H1 (cell line): ENCODE measurements at regions of chr9 and their contacts with region 1.

Region 1: DNA sequence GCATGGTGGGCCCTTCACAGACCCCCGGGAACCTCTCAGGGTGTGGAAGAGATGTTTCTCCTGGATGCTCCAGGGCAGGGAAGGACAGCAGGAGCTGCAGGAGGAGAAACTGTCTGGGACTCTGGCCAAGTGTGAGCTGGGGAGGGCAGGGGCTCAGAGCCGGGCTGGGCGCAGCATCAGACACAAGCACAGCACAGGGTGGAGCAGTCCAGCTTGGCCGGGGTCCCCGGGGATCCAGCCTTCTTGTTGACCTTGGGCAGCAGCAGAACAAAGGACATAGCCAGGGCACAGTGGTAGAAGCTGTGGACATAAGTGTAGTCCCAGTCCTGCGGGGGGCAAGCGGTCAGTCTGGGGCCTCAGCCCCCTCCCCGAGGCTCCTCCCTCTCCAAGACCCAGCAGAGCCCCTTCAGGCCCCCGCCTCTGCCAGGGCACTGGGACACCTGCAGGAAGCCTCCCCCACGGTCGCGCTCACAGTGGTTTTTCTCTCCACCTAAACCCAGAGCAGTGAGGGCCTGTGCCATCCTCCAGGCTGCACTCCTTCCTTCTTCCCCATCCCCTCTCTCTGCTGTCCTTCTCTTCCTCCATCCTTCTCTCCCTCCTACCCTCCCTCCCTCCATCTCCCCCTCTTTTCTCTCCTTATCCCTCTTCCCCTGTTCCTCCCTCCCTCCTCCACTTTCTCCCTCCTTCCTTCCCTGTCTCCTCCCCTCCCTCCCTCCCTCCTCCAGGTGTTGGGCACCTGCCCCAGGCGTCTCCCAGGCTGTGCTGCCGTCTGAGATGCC is 10.1 kb downstream of the MYMK start:
- DNase-seq: no peak
- H3K4me3 ChIP-seq: no peak overlapping the region
- H3K27ac ChIP-seq: no peak overlapping the region
- H3K4me1 ChIP-seq: peaks cover 0 to 15% (median 5%) of the 10 kb centered on the region in 4 experiments; a peak in 6 of 7 replicates
- H3K27me3 ChIP-seq: no peaks in the 10 kb centered on the region; a peak in 1 of 7 replicates
- CTCF ChIP-seq: no peak
- EP300 ChIP-seq: no peak
- POLR2A ChIP-seq: no peak
- RAD21 ChIP-seq: no peak

Region 2: DNA sequence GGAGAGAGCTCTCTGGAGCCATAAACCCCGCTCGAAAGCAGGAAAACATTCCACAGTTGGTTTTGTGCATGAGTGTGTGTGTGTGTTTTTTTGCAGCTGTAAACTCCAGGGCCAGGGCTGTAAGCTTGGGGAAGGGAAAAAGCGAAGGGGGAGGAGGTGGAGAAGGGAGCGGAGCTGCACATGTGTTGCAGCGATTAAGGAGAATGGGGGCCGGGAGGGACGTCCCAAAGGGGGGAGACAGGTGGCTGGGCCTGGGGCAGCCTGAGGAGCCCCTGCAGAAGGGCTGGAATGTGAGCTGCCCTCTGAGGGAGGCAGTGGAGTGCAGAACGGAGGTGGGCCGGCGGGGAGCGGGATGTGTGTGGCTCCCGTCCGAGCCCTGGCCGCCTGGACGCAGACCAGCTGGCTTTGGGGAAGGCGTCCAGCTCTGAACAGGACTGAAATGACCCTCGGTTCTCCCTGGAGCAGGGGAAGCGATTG is 12.8 kb after region 1 on chr9:
- CTCF ChIA-PET with region 1: interaction called, 14 read pairs
- POLR2A ChIA-PET with region 1: interaction called, 9 read pairs
- DNase-seq: no peak
- H3K4me3 ChIP-seq: no peak overlapping the region; a peak in 1 of 8 replicates
- H3K27ac ChIP-seq: no peak overlapping the region
- H3K4me1 ChIP-seq: peaks cover 4 to 33% (median 30%) of the 10 kb centered on the region in 4 experiments
- H3K27me3 ChIP-seq: peaks cover 0 to 5% (median 2%) of the 10 kb centered on the region in 4 experiments; a peak in 4 of 7 replicates
- CTCF ChIP-seq: no peak
- EP300 ChIP-seq: no peak
- POLR2A ChIP-seq: no peak
- RAD21 ChIP-seq: no peak